Breast epithelium (tissue), 4 donors: ENCODE measurements at regions of chr11 and their contacts with region 1.

Region 1: DNA sequence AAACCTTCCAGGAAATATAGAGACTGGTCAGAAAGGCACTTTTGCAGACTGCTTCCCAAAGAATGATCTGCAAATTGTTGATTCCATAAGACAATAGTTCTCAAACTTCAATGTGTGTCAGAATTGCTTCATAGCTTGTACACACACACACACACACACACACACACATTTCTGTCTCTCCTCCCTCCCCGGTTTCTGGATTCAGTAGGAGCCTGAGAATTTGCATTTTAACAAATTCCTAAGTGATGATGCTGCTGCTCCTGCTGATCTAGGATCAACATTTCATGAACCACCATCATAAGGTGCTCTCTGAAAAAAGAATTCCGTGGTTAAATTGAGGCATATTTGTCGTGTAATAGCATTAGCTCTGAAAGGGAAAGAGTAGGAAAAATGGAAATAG is 35.3 kb upstream of the FZD4 start:
- DNase-seq: no peak
- H3K4me3 ChIP-seq: no peak overlapping the region
- H3K27ac ChIP-seq: no peak overlapping the region
- H3K4me1 ChIP-seq: no peaks in the 10 kb centered on the region
- H3K27me3 ChIP-seq: no peaks in the 10 kb centered on the region
- CTCF ChIP-seq: no peak
- POLR2A ChIP-seq: no peak

Region 2: DNA sequence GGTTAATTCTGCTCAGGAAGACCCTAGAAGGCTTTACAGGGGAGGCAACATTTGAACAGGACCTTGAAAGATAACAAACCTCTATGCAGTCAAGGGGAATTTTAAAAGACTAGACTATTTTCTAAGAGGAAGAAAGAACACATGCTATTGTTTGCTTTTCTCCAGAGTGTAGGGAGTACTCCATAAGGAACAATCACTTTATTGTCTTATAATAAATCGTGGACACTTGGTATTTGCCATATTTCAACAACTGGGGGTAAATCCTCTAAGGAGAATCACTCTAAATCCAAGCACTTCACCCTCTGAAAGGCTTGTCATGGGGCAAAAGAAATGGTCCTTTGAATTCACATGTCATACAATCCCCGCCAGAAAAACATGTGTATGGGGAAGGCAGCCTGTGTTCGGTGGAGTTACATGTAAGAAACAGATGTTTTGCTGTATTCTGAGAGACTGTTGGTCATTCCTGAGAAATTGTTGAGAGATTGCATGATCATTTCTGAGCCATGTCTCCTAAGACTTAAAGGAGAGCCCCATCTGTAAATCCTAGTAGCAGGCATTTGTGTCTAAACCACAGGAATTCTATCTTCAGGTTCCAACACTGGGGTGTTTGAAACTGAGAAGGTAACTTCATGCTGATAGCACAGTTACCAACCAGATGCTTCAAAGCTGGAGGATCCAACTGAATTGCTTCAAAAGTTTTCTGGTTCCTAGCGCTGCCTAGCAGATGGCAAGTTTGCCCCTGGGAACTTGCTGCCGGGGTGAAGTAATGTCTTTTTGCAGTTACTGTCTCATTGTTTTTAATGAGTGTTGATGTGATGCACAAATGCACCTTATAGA is 102.1 kb before region 1 on chr11:
- intact Hi-C with region 1: no loop called
- DNase-seq: no peak
- H3K4me3 ChIP-seq: no peak overlapping the region
- H3K27ac ChIP-seq: no peak overlapping the region
- H3K4me1 ChIP-seq: no peaks in the 10 kb centered on the region
- H3K27me3 ChIP-seq: no peaks in the 10 kb centered on the region
- CTCF ChIP-seq: no peak
- POLR2A ChIP-seq: no peak

Region 3: DNA sequence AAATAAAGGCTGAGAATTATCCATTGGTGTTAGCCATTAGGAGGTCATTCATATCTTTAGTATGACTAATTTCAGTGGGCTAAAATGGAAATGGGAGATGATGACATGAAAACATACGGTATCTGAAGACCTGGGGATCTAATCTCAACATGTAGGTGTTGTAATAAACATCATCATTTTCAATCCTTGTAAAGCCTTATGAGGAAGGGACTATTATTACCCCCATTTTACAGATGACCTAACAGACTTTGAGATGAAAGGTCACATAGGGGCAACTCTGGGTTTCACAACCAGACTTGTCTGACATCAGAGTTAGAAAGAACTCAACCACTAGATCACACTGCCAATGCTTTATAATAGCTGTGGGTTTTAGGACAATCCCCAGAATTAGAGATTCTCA is 12.4 kb after region 1 on chr11:
- intact Hi-C with region 1: loop called (anchors 1 kb)
- DNase-seq: no peak
- H3K4me3 ChIP-seq: no peak overlapping the region
- H3K27ac ChIP-seq: no peak overlapping the region
- H3K4me1 ChIP-seq: no peaks in the 10 kb centered on the region
- H3K27me3 ChIP-seq: no peaks in the 10 kb centered on the region
- CTCF ChIP-seq: no peak
- POLR2A ChIP-seq: no peak